ENCODE measurements at regions of chr11 and their contacts with region 1.

Region 1: DNA sequence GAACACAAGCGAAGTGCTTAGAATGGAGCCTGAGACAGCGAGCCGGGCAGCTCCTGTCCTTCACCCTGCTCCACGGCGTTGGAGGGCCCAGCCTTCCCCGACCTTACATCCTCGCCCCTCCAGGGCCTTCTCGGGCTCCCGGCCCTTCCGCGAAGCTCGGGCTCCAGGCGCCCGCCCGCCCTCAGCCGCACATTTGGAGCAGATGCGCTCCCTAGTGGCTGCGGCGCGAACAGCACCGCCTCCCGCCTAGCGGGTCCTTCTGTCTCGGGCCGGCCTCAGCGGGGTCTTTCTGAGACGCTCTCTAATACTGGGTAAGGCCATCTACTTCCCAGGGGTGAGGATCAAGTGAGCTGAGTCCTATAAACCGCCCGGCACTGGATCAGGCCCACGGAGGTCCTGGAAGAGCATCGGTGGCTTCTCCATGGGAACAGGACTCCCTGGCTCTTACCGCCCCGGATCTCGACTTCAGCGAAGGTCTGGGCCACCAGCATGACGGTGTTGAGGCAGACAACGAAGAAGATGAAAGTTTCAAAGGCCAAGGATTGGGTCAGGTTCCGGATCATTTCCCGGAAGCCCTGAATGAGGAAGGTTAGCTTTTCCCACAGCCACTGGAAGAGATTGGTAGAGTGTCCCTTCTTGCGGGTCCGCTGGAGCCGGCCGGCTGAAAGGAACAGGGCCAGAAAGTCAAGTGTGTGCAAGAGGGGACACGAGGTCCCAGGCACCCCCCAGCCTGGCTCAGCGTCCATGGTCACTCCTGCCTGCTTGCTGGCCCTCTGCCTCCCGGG is 3.7 kb downstream of the CATSPER1 start:
- DNase-seq: peak; percentile 80
- H3K4me3 Mint-ChIP-seq: no peak overlapping the region
- H3K27ac Mint-ChIP-seq: no peak overlapping the region
- H3K4me1 Mint-ChIP-seq: peaks cover 21% of the 10 kb centered on the region
- H3K27me3 Mint-ChIP-seq: peaks cover 9% of the 10 kb centered on the region

Region 2: DNA sequence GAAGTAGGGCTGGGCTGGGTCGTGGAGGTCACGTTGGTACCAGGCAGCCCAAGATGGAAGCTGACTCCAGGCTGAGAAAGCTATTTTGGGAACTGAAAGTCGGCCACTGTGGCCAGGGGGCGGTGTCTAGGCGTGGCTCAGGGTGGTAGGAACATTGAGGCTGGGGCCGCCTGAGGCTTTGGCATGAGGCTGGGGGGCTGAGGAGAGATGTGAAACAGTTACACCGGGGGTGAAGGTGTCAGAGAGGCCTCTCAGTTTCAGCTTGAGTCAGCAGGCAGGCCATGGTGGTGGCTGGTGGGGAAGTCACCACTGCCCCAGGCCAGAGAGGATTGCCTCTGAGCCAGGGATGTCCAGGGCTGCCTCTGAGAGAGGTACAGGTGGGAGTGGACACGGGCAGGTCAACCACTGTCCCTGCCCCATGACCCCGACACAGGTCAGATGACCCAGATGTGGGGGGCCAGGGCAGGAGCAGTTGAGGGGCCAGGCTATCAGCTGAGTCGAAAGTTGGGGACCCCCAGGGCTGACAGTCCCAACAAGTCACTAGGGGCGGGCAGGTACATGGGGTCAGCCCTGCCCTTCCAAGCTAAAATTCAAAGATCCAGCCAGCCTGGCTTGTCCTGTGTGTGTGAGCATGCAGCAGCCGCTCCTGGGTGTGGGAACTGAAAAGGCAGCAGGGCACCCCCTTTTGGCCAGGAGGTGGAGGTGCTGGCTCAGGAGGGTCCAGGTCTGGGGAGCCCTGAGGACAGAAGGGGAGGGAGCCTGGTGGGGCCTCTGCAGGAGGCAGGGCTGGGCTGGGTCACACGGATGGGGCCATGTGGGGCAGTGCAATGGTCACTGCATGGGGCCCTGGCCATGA is 434.2 kb before region 1 on chr11:
- CTCF ChIA-PET with region 1: no interaction called
- POLR2A ChIA-PET with region 1: no interaction called
- DNase-seq: peak; percentile 83
- H3K4me3 Mint-ChIP-seq: peak overlapping the region; percentile 44
- H3K27ac Mint-ChIP-seq: peak overlapping the region; percentile 95
- H3K4me1 Mint-ChIP-seq: peaks cover 43% of the 10 kb centered on the region
- H3K27me3 Mint-ChIP-seq: no peaks in the 10 kb centered on the region

Region 3: GRCh38 chr11:65973439-65974110 is 49.0 kb before region 1 on chr11:
- CTCF ChIA-PET with region 1: no interaction called
- POLR2A ChIA-PET with region 1: no interaction called
- DNase-seq: no peak
- H3K4me3 Mint-ChIP-seq: no peak overlapping the region
- H3K27ac Mint-ChIP-seq: no peak overlapping the region
- H3K4me1 Mint-ChIP-seq: peaks cover 6% of the 10 kb centered on the region
- H3K27me3 Mint-ChIP-seq: no peaks in the 10 kb centered on the region

Region 4: GRCh38 chr11:66001942-66002647 is 20.5 kb before region 1 on chr11 and contains the starts of genes BANF1 and EIF1AD:
- CTCF ChIA-PET with region 1: interaction called, 12 read pairs
- POLR2A ChIA-PET with region 1: interaction called, 7 read pairs
- DNase-seq: peak; percentile 96
- H3K4me3 Mint-ChIP-seq: peak within 1 kb of the TSS; percentile 94
- H3K27ac Mint-ChIP-seq: peak within 1 kb of the TSS; percentile 95
- H3K4me1 Mint-ChIP-seq: peaks cover 48% of the 10 kb centered on the region
- H3K27me3 Mint-ChIP-seq: no peaks in the 10 kb centered on the region
- total RNA-seq, gene BANF1: 191 to 196 TPM
- total RNA-seq, gene EIF1AD: 43.6 to 45.9 TPM

Region 5: DNA sequence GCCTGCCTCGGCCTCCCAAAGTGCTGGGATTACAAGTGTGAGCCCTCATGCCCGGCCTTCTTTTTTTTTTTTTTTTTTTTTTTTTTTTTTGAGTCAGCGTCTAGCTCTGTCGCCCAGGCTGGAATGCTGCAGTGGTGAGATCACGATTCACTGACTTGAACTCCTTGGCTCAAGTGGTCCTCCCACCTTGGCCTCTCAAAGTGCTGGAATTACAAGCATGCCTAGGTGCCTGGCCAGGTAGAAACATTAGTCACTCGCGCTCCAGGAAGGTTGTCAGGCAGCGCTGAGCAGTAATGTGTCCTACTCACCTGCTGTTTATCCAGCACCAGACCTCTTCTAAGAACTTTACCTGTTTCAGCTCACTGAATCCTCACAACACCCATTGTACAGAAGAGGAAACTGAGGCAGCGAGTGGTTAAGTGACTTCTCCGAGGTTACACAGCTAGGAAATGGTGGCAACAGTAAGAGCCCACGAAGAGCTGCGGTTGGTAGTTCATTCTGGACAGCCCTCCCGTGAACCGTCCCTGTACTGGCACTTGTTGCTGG is 11.3 kb before region 1 on chr11:
- CTCF ChIA-PET with region 1: interaction called, 11 read pairs
- POLR2A ChIA-PET with region 1: interaction called, 9 read pairs
- DNase-seq: no peak
- H3K4me3 Mint-ChIP-seq: no peak overlapping the region
- H3K27ac Mint-ChIP-seq: no peak overlapping the region
- H3K4me1 Mint-ChIP-seq: no peaks in the 10 kb centered on the region
- H3K27me3 Mint-ChIP-seq: peaks cover 26% of the 10 kb centered on the region

Region 6: GRCh38 chr11:66045177-66045639 is 22.6 kb after region 1 on chr11:
- CTCF ChIA-PET with region 1: interaction called, 26 read pairs
- POLR2A ChIA-PET with region 1: no interaction called
- DNase-seq: peak; percentile 84
- H3K4me3 Mint-ChIP-seq: peak overlapping the region; percentile 14
- H3K27ac Mint-ChIP-seq: peak overlapping the region; percentile 13
- H3K4me1 Mint-ChIP-seq: peaks cover 16% of the 10 kb centered on the region
- H3K27me3 Mint-ChIP-seq: peaks cover 4% of the 10 kb centered on the region

Region 7: DNA sequence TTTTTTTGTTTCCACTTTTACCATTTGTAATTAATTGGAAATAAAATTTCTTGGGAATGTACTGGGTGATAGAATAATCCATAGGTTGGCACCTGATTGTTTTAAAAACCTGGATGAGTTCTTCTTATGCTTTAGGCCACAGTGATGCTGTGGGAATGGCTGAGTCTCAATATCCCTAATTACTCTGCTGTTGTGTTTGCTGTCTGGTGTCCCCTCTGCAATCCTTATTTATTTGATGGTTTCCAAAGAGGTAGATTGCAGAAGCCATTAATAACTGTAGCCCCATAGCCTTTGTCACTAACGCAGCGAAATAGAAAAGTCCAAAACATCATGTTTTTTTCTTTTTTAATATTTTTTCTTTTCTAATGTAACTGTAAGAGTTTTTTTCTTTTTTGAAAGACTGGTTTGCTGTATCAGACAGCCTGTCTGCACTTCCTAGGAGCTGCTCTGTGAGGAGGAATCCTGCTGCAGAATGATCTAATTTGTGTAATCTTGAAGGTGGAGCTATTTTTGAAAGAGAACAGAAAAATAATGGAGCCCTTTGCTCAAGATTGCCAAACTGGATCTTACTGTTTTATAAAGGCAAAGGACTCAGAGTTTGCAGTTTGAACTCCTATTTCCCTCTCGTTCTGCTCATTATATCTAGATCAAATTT is 62.4 kb after region 1 on chr11:
- CTCF ChIA-PET with region 1: no interaction called
- POLR2A ChIA-PET with region 1: no interaction called
- DNase-seq: no peak
- H3K4me3 Mint-ChIP-seq: no peak overlapping the region
- H3K27ac Mint-ChIP-seq: no peak overlapping the region
- H3K4me1 Mint-ChIP-seq: peaks cover 46% of the 10 kb centered on the region
- H3K27me3 Mint-ChIP-seq: no peaks in the 10 kb centered on the region

Region 8: GRCh38 chr11:66207876-66208275 is 185.3 kb after region 1 on chr11:
- CTCF ChIA-PET with region 1: no interaction called
- POLR2A ChIA-PET with region 1: no interaction called
- DNase-seq: no peak
- H3K4me3 Mint-ChIP-seq: no peak overlapping the region
- H3K27ac Mint-ChIP-seq: no peak overlapping the region
- H3K4me1 Mint-ChIP-seq: peaks cover 1% of the 10 kb centered on the region
- H3K27me3 Mint-ChIP-seq: no peaks in the 10 kb centered on the region